AG04449 (cell line): ENCODE measurements at regions of chr9 and their contacts with region 1.

Region 1: GRCh38 chr9:136671646-136672430 is 9.1 kb downstream of the EGFL7 start:
- DNase-seq: no peak
- H3K4me3 ChIP-seq: no peak overlapping the region
- CTCF ChIP-seq: peak; percentile 88

Region 2: DNA sequence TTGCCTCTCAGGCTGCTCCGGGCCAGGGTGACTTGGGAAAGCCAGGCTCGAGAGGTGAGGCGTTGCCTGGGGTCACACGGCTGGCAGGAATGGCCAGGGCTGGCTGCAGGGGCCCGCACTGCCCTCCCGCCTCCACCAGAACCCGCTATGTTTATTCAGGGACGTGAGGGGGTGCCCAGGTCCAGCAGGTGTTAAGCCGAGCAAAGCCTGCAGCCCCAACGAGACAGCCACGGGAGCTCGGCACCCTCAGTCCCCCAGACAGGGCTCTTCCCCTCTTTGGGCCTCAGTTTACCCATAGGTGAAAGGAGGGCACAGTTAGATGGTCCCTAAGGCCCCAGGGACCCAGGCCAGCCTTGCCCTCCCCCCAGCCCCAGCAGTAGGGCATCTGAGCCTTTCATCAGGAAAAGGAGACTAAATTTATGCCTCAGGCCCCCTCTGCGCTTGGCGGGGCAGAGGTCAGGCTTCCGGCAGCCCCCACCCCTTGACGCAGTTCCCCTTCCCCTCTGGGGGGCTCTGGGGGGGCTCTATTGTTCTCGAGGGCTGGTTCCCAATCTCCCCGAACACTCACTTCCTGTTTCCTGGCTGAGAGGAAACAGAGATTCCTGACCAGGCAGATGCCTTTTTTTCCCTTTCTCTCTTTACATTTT is 16.2 kb before region 1 on chr9:
- CTCF ChIA-PET with region 1: interaction called, 16 read pairs
- POLR2A ChIA-PET with region 1: no interaction called
- DNase-seq: no peak
- H3K4me3 ChIP-seq: no peak overlapping the region
- CTCF ChIP-seq: no peak

Region 3: DNA sequence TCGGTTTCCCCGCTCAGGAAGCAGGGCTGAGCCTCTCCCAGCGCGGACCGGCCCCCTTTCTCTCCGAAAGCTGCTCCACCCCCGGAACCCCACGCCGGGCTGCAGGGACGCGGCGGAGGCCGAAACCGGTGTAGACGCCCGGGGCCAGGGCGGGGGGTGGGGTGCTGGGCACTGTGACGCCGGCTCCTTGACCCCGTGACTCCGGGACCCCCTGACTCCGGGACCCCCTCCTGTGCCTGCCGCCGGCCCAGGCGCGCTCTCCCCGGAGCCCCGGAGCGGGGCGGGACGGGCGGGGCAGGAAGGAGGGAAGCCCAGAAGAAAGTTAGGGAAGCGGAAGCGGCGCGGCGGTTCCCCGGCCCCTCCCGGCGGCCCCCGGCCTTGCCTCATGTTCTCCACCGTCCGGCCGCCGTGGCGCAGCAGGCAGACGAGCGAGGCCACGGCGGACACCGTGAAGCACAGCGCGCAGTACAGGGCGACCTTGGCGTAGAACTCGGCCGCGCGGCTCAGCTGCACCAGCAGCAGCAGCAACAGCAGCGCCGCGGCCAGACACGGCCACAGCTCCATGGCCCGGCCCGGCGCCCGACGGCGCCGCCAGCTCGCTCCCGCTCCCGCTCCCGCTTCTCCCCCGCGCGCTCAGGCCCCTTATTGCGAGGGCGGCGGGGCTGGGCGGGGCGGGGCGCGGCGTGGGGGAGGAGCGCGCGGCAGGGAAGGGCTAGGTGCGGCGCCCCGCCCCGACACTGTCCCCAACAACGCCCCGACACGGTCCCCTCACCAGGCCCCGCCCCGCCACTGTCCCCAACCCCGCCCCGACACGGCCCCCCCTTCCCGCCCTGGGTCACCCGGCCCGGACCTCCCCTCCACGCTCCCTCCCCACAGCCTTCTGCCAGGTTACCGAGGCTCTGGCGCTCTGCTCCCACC is 15.2 kb after region 1 on chr9 and contains the start of gene AGPAT2:
- CTCF ChIA-PET with region 1: interaction called, 48 read pairs
- POLR2A ChIA-PET with region 1: interaction called, 3 read pairs
- DNase-seq: no peak
- H3K4me3 ChIP-seq: peak within 1 kb of the TSS; percentile 70
- CTCF ChIP-seq: no peak